Tibial artery (tissue), 4 donors: ENCODE measurements at regions of chr1 and their contacts with region 1.

Region 1: GRCh38 chr1:35268282-35269200 is at the start of gene ZMYM4:
- DNase-seq: peak; percentile 87 to 94
- H3K4me3 ChIP-seq: peak within 1 kb of the TSS; percentile 77 to 83
- H3K27ac ChIP-seq: peak within 1 kb of the TSS; percentile 78 to 88
- H3K4me1 ChIP-seq: peaks cover 0 to 41% (median 9%) of the 10 kb centered on the region in 4 donors
- H3K27me3 ChIP-seq: no peaks in the 10 kb centered on the region
- CTCF ChIP-seq: no peak

Region 2: DNA sequence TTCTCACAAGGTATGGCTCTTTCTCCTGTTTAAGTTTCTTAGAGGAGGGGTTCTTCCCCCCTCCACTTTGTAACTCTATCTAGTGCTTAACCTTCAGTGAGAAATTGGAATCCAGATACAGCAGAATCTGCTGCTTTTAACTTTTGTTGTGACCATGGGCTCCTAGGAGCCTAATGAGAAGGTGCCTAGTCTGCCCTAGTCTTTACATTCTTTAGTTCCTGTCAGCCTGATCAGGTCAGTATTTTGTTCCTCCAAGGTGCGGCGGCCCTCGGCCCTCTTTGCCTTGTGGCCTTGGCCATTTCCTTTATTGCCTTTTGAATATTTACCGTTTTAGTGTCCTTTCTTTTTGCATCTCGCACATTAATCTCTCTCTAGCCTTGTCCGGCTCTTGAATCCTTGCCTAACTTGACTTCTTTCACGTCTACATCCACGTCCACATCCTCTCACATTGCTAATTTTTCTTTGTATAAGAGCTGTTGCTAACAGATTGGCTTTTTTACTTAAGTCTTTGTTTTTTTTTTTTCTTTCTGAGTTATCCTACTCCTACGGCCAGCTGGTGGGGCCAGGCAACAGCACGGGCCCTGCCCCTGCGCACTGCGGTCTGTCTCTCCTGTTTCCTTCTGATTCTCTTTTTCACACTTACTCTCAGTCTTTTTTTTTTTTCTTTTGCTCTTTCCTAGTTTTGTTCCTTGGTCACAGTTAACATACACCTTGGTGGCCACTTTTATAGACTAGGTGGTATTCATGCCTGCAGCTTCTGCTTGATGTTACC is 124.6 kb before region 1 on chr1:
- intact Hi-C with region 1: no loop called
- DNase-seq: no peak
- H3K4me3 ChIP-seq: no peak overlapping the region
- H3K27ac ChIP-seq: no peak overlapping the region
- H3K4me1 ChIP-seq: no peaks in the 10 kb centered on the region
- H3K27me3 ChIP-seq: no peaks in the 10 kb centered on the region
- CTCF ChIP-seq: no peak

Region 3: GRCh38 chr1:35192853-35193664 is 75.5 kb before region 1 on chr1 and contains the start of gene SFPQ:
- intact Hi-C with region 1: loop called (anchors 2 kb)
- DNase-seq: peak; percentile 98 to 99
- H3K4me3 ChIP-seq: peak within 1 kb of the TSS; percentile 96 to 100
- H3K27ac ChIP-seq: peak within 1 kb of the TSS; percentile 99
- H3K4me1 ChIP-seq: peaks cover 0 to 38% (median 33%) of the 10 kb centered on the region in 4 donors
- H3K27me3 ChIP-seq: no peaks in the 10 kb centered on the region
- CTCF ChIP-seq: no peak